Dorsolateral prefrontal cortex (tissue), 120 donors: ENCODE measurements at regions of chr17 and their contacts with region 1.

Region 1: GRCh38 chr17:68035523-68036303 is at the start of gene KPNA2:
- DNase-seq: peak; percentile 76 to 94 (median 90)
- H3K4me3 ChIP-seq: peak within 1 kb of the TSS; percentile 50 to 100 (median 96)
- H3K27ac ChIP-seq: peak within 1 kb of the TSS; percentile 29 to 93 (median 80)
- H3K27me3 ChIP-seq: no peaks in the 10 kb centered on the region
- CTCF ChIP-seq: peak in 21 of 56 donors; percentile 1 to 44 (median 16)
- total RNA-seq, gene KPNA2: 17.2 to 55.8 (median 35.5) TPM

Region 2: DNA sequence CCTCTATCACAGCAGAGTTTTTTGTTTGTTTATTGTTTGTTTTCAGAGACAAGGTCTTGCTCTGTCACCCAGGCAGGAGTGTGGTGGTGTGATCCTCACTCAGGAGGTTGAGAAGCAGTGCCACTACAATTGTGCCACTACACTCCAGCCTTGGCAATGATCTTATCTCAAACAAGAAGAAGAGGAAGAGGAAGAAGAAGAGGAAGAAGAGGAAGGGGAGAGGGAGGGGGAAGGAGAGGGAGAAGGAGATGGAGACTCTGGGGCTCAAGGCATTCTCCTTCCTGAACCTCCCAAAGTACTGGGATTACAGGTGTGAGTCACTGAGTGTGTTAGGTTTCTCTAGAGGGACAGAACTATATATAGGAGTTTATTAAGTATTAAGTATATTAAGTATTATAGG is 22.3 kb before region 1 on chr17:
- intact Hi-C with region 1: no loop called
- DNase-seq: no peak
- H3K4me3 ChIP-seq: no peak overlapping the region
- H3K27ac ChIP-seq: no peak overlapping the region
- H3K27me3 ChIP-seq: no peaks in the 10 kb centered on the region
- CTCF ChIP-seq: no peak

Region 3: DNA sequence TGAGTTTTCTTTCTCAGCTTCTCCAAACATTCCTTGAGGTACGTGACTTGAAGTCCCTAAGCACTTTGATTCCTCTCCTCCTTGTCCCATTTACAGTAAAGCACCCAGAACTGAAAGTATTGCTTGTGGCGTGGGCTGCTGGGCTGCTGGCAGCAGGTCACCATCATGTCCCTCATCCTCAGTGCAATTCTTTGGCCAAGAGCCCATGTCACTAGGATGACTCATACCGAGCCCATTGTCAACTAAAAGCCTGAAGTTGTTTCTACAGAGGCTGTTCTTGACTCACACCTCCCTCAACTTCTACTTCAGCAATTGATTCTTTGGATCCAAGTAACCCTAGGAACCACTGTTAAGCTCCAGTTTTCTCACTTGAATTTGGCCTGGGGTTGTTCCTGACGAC is 54.2 kb after region 1 on chr17:
- intact Hi-C with region 1: no loop called
- DNase-seq: peak in 1 of 10 donors; percentile 57
- H3K4me3 ChIP-seq: no peak overlapping the region
- H3K27ac ChIP-seq: no peak overlapping the region
- H3K27me3 ChIP-seq: no peaks in the 10 kb centered on the region
- CTCF ChIP-seq: no peak

Region 4: GRCh38 chr17:68101075-68101992 is 65.6 kb after region 1 on chr17:
- intact Hi-C with region 1: loop called in 1 of 2 experiments (anchors 10 kb)
- DNase-seq: peak; percentile 64 to 95 (median 86)
- H3K4me3 ChIP-seq: peak overlapping the region; percentile 59 to 92 (median 81)
- H3K27ac ChIP-seq: peak overlapping the region; percentile 41 to 96 (median 81)
- H3K27me3 ChIP-seq: no peaks in the 10 kb centered on the region
- CTCF ChIP-seq: peak in 14 of 56 donors; percentile 9 to 50 (median 16)

Region 5: DNA sequence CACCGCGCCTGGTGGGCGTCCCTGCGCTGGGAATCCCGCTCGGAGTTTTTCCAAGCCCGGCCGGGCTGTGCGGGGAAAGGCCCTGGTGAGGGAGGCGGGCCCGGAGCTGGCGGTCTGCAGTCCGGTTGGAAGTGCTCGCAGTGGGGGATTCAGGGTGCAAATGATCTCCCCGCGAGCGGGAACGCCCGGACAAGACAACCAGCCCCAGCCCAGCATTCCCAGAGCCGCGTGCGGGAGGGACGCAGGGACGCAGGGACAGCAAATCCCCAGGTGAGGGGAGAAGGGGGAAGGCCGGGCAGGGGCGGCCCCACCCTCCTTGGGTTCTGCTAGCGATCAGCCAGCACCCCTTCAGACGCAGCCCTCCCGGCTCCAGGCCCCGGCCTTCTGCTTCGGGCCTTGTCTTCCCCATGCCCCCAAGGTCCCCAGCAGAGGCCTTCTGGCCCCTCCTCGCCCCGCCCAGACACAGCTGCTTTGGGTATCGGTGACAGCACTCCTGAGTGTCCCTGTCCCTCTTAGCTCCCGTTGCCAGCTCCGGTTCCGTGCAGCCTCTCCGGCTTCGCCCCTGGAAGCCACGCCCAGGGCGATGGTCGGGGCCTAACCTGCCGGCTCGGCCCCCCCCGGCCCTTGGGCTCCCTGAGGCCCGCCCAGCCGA is 161.4 kb after region 1 on chr17:
- intact Hi-C with region 1: no loop called
- DNase-seq: peak in 1 of 10 donors; percentile 42
- H3K4me3 ChIP-seq: peak overlapping the region in 56 of 59 donors; percentile 19 to 67 (median 46)
- H3K27ac ChIP-seq: no peak overlapping the region
- H3K27me3 ChIP-seq: peaks cover 3 to 57% (median 42%) of the 10 kb centered on the region in 45 donors
- CTCF ChIP-seq: no peak